Heart left ventricle (tissue), 16 donors: ENCODE measurements at regions of chr2 and their contacts with region 1.

Region 1: GRCh38 chr2:120037995-120038541 is 25.2 kb downstream of the EPB41L5 start:
- DNase-seq: no peak
- ATAC-seq: no peak
- H3K4me3 ChIP-seq: no peak overlapping the region
- H3K27ac ChIP-seq: no peak overlapping the region
- H3K4me1 ChIP-seq: peaks cover 0 to 14% (median 3%) of the 10 kb centered on the region in 12 donors
- H3K27me3 ChIP-seq: no peaks in the 10 kb centered on the region
- CTCF ChIP-seq: no peak
- POLR2A ChIP-seq: no peak

Region 2: DNA sequence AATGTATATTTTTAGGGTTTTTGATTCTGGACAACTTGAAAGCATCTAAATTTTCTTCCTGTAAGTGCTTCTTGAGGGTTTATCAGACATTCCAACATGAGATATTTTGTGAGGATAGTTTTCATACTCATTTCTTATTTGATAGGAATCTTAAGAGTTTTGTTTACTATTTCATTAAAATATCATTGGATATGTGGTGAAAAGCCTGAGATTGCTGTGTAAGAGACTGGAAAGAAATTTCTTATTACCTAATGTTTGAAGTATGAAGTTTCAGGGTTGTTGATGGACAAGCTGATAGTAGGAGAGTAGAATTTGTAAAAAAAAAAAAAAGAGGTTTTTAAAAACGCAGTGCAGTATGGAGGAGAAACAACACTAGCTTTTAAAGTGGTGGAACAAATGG is 17.6 kb before region 1 on chr2:
- intact Hi-C with region 1: loop called in 1 of 10 experiments (anchors 2 kb)
- DNase-seq: no peak
- ATAC-seq: no peak
- H3K4me3 ChIP-seq: no peak overlapping the region
- H3K27ac ChIP-seq: no peak overlapping the region
- H3K4me1 ChIP-seq: no peaks in the 10 kb centered on the region
- H3K27me3 ChIP-seq: no peaks in the 10 kb centered on the region
- CTCF ChIP-seq: no peak
- POLR2A ChIP-seq: no peak

Region 3: GRCh38 chr2:120419073-120419472 is 381.0 kb after region 1 on chr2:
- intact Hi-C with region 1: no loop called
- DNase-seq: peak in 4 of 5 donors; percentile 63 to 81 (median 70)
- ATAC-seq: peak; percentile 94 to 98 (median 97)
- H3K4me3 ChIP-seq: no peak overlapping the region
- H3K27ac ChIP-seq: no peak overlapping the region
- H3K4me1 ChIP-seq: peaks cover 0 to 7% (median 0%) of the 10 kb centered on the region in 12 donors
- H3K27me3 ChIP-seq: peaks cover 0 to 8% (median 0%) of the 10 kb centered on the region in 9 donors
- CTCF ChIP-seq: peak in 5 of 12 donors; percentile 10 to 29 (median 16)
- POLR2A ChIP-seq: no peak